ENCODE measurements at regions of chr6 and their contacts with region 1.

Region 1: DNA sequence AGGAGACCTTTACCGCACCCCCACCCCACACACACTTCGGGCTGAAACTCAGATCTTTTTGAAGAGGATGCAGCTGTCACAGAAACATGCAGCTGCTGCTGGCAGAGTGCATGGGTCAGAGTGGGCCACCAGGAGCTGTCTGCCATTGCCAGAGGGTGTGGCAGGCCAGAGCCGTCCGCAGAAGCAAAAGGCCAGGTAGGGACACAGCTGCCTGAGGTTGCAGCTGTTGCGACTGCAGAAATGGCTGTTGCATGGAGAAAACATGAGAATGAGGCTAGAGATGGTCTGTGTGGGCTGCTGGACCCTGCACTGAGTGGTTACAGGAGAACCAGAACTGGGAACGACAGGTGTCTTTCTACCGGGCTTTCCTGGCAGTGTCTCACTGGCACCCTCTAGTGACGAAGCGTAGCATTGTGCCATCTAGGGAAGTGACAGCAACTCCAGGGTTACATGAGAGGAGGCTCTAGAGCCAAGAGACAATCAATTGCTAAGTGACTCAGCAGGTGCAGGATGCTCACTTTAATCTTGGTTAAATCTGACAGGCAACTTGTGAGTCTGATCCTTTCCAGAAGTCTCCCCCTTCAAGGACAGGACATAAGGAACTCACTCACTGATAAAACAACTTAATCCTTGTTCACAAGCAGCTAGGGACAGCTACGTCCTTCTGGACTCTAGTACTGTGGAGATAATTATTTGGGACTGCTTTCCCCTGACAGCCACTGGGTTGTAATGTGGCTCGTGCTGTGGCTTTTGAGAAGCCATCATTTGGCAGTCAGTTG is 29.1 kb upstream of the SERPINB9 start:
- DNase-seq: peak; percentile 74
- H3K4me3 ChIP-seq: no peak overlapping the region
- H3K27ac ChIP-seq: no peak overlapping the region
- H3K4me1 ChIP-seq: no peaks in the 10 kb centered on the region
- H3K27me3 ChIP-seq: no peaks in the 10 kb centered on the region
- CTCF ChIP-seq: peak; percentile 79 to 89 (median 83)
- POLR2A ChIP-seq: no peak

Region 2: GRCh38 chr6:2416128-2416712 is 515.9 kb before region 1 on chr6:
- intact Hi-C with region 1: no loop called
- DNase-seq: no peak
- H3K4me3 ChIP-seq: no peak overlapping the region
- H3K27ac ChIP-seq: no peak overlapping the region
- H3K4me1 ChIP-seq: no peaks in the 10 kb centered on the region
- H3K27me3 ChIP-seq: no peaks in the 10 kb centered on the region
- CTCF ChIP-seq: no peak
- POLR2A ChIP-seq: no peak

Region 3: GRCh38 chr6:2791124-2791974 is 140.8 kb before region 1 on chr6:
- intact Hi-C with region 1: loop called (anchors 5 kb)
- DNase-seq: peak; percentile 40
- H3K4me3 ChIP-seq: no peak overlapping the region
- H3K27ac ChIP-seq: peak overlapping the region; percentile 43 to 51
- H3K4me1 ChIP-seq: no peaks in the 10 kb centered on the region
- H3K27me3 ChIP-seq: no peaks in the 10 kb centered on the region
- CTCF ChIP-seq: peak; percentile 25 to 86 (median 64)
- POLR2A ChIP-seq: no peak

Region 4: GRCh38 chr6:2848851-2849250 is 83.3 kb before region 1 on chr6:
- intact Hi-C with region 1: loop called (anchors 1 kb)
- DNase-seq: no peak
- H3K4me3 ChIP-seq: no peak overlapping the region
- H3K27ac ChIP-seq: no peak overlapping the region
- H3K4me1 ChIP-seq: no peaks in the 10 kb centered on the region
- H3K27me3 ChIP-seq: no peaks in the 10 kb centered on the region
- CTCF ChIP-seq: no peak
- POLR2A ChIP-seq: no peak